Heart right ventricle (tissue), 16 donors: ENCODE measurements at regions of chr5 and their contacts with region 1.

Region 1: DNA sequence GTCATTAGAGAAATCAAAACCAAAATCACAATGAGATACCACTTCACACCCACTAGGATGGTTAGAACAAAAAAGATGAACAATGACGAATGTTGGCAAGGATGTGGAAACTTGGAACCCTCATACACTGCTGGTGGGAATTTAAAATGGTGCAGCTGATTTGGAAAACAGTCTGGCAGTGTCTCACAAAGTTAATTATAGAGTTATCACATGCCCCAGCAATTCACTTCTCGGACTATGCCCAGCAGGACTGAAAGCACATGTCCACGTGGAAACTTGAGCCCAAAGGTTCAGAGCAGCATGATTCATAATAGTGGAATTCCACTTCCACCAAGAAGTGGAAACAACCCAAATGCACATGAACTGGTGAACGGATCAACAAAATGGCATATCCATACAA is 85.0 kb upstream of the HRH2 start:
- DNase-seq: peak in 1 of 2 donors; percentile 62
- ATAC-seq: peak; percentile 84 to 98 (median 91)
- H3K4me3 ChIP-seq: no peak overlapping the region
- H3K27ac ChIP-seq: peak overlapping the region in 9 of 10 donors; percentile 50 to 89 (median 81)
- H3K4me1 ChIP-seq: peaks cover 0 to 19% (median 6%) of the 10 kb centered on the region in 9 donors
- H3K27me3 ChIP-seq: peaks cover 0 to 6% (median 0%) of the 10 kb centered on the region in 7 donors
- CTCF ChIP-seq: no peak

Region 2: GRCh38 chr5:175597718-175598117 is 24.8 kb after region 1 on chr5:
- intact Hi-C with region 1: loop called in 1 of 10 experiments (anchors 2 kb)
- DNase-seq: no peak
- ATAC-seq: peak in 6 of 8 donors; percentile 34 to 71 (median 52)
- H3K4me3 ChIP-seq: no peak overlapping the region
- H3K27ac ChIP-seq: peak overlapping the region in 9 of 10 donors; percentile 49 to 91 (median 84)
- H3K4me1 ChIP-seq: peaks cover 0 to 9% (median 5%) of the 10 kb centered on the region in 9 donors
- H3K27me3 ChIP-seq: peaks cover 0 to 16% (median 0%) of the 10 kb centered on the region in 7 donors
- CTCF ChIP-seq: no peak

Region 3: GRCh38 chr5:175609526-175609925 is 36.6 kb after region 1 on chr5:
- intact Hi-C with region 1: no loop called
- DNase-seq: no peak
- ATAC-seq: no peak
- H3K4me3 ChIP-seq: no peak overlapping the region
- H3K27ac ChIP-seq: no peak overlapping the region
- H3K4me1 ChIP-seq: peaks cover 0 to 9% (median 0%) of the 10 kb centered on the region in 9 donors
- H3K27me3 ChIP-seq: no peaks in the 10 kb centered on the region
- CTCF ChIP-seq: no peak

Region 4: GRCh38 chr5:175689147-175689991 is 116.5 kb after region 1 on chr5:
- intact Hi-C with region 1: loop called in 3 of 10 experiments (anchors 2 to 10 kb)
- DNase-seq: peak in 1 of 2 donors; percentile 25
- ATAC-seq: peak in 5 of 8 donors; percentile 26 to 78 (median 27)
- H3K4me3 ChIP-seq: no peak overlapping the region
- H3K27ac ChIP-seq: peak overlapping the region; percentile 16 to 91 (median 76)
- H3K4me1 ChIP-seq: peaks cover 15 to 95% (median 57%) of the 10 kb centered on the region in 9 donors
- H3K27me3 ChIP-seq: no peaks in the 10 kb centered on the region
- CTCF ChIP-seq: no peak